Endothelial cell of umbilical vein (primary cell): ENCODE measurements at regions of chr12 and their contacts with region 1.

Region 1: GRCh38 chr12:120367233-120367923 is 1.6 kb downstream of the MSI1 start:
- DNase-seq: no peak
- H3K4me3 ChIP-seq: no peak overlapping the region
- H3K27ac ChIP-seq: no peak overlapping the region
- H3K4me1 ChIP-seq: no peaks in the 10 kb centered on the region
- H3K27me3 ChIP-seq: peaks cover 47 to 54% of the 10 kb centered on the region in 2 experiments
- CTCF ChIP-seq: peak; percentile 36 to 51
- POLR2A ChIP-seq: no peak

Region 2: GRCh38 chr12:119544765-119545625 is 822.4 kb before region 1 on chr12:
- CTCF ChIA-PET with region 1: no interaction called
- POLR2A ChIA-PET with region 1: no interaction called
- dilution Hi-C with region 1: no loop called
- intact Hi-C with region 1: no loop called
- DNase-seq: peak; percentile 76
- H3K4me3 ChIP-seq: no peak overlapping the region
- H3K27ac ChIP-seq: no peak overlapping the region
- H3K4me1 ChIP-seq: no peaks in the 10 kb centered on the region
- H3K27me3 ChIP-seq: no peaks in the 10 kb centered on the region
- CTCF ChIP-seq: peak; percentile 63 to 76
- POLR2A ChIP-seq: no peak

Region 3: GRCh38 chr12:120381752-120382419 is 14.5 kb after region 1 on chr12:
- CTCF ChIA-PET with region 1: interaction called, 24 read pairs
- POLR2A ChIA-PET with region 1: no interaction called
- dilution Hi-C with region 1: no loop called
- intact Hi-C with region 1: no loop called
- DNase-seq: no peak
- H3K4me3 ChIP-seq: no peak overlapping the region
- H3K27ac ChIP-seq: no peak overlapping the region
- H3K4me1 ChIP-seq: no peaks in the 10 kb centered on the region
- H3K27me3 ChIP-seq: peaks cover 9% of the 10 kb centered on the region in 2 experiments
- CTCF ChIP-seq: no peak
- POLR2A ChIP-seq: no peak